H1 (cell line): ENCODE measurements at regions of chr15 and their contacts with region 1.

Region 1: DNA sequence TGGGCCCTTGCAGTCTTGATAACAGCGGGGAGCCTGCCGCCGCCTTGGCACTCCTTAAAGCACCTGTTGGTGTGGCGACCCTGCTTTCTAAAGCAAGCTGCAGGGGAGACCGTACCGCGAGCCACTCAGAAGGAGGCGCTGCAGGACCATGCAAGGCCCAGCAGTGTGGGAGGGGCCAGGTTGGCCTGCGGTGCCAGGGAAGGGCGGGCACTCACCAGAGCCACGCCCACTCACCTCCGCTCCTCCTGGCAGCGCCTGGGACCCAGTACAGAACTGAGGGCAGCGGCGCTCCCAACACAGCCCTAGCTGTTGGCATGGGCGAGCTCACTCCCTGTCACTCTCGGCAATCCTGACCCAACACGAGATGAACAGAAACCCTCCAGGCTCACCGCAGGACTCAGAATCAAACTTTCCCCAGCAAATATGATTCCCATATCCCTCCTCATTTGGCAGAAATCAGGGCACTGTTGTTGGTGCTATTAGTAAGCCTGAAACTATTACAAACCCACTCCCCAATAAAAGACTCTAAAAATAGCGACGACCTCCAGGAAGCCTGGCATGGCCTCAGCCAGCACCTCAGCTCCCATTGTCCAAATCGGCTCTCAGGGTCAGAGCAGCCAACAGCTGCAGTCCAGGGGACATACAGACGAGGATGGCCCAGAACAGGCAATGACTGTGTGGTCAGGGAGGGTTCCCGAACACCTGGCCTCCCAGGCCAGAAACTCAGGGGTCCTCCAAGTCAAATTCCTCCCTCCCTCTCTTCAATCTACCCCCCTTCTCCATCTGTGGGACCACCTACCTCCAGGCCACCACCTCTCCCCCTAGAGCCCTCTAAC is 77.2 kb downstream of the TBC1D2B start:
- DNase-seq: peak; percentile 85 to 96
- H3K4me3 ChIP-seq: no peak overlapping the region
- H3K27ac ChIP-seq: no peak overlapping the region
- H3K4me1 ChIP-seq: peaks cover 0 to 4% (median 0%) of the 10 kb centered on the region in 4 experiments; a peak in 2 of 7 replicates
- H3K27me3 ChIP-seq: no peaks in the 10 kb centered on the region
- CTCF ChIP-seq: peak; percentile 89 to 98 (median 93)
- EP300 ChIP-seq: peak in 1 of 2 experiments; percentile 46; a peak in 1 of 3 replicates
- POLR2A ChIP-seq: no peak
- RAD21 ChIP-seq: peak; percentile 97 to 98

Region 2: GRCh38 chr15:77753270-77753873 is 246.9 kb before region 1 on chr15:
- CTCF ChIA-PET with region 1: no interaction called
- POLR2A ChIA-PET with region 1: no interaction called
- DNase-seq: peak in 1 of 2 experiments; percentile 82
- H3K4me3 ChIP-seq: no peak overlapping the region
- H3K27ac ChIP-seq: no peak overlapping the region
- H3K4me1 ChIP-seq: peaks cover 0 to 2% (median under 1%) of the 10 kb centered on the region in 4 experiments; a peak in 2 of 7 replicates
- H3K27me3 ChIP-seq: peaks cover 0 to 11% (median 1%) of the 10 kb centered on the region in 4 experiments; a peak in 2 of 7 replicates
- CTCF ChIP-seq: no peak
- EP300 ChIP-seq: no peak
- POLR2A ChIP-seq: no peak
- RAD21 ChIP-seq: peak; percentile 1 to 10; a peak in 1 of 4 replicates

Region 3: DNA sequence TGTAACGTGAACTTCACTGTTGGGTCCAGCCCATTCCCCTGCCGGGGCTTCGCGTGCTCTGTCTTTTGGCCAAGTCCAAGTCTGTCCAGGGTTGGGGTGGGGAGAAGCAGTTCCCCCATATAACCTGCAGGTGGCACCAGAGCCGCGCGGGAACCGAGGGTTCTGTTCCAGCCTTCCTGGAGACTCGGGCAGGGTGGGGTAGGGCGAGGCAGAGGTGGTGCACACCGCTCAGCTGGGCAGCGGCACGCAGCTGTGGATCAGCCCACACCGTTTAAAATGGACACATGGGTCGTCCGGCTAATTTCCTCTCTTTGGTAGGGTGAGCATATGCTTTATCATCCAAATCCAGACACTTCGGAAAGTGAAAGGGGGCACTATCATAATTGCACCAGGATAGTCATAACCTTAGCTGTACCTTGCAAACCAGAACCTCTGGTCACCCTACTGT is 40.9 kb before region 1 on chr15:
- CTCF ChIA-PET with region 1: interaction called, 22 read pairs
- POLR2A ChIA-PET with region 1: no interaction called
- DNase-seq: peak; percentile 58 to 99
- H3K4me3 ChIP-seq: no peak overlapping the region
- H3K27ac ChIP-seq: no peak overlapping the region
- H3K4me1 ChIP-seq: peaks cover 0 to 5% (median 1%) of the 10 kb centered on the region in 4 experiments; a peak in 4 of 7 replicates
- H3K27me3 ChIP-seq: no peaks in the 10 kb centered on the region; a peak in 1 of 7 replicates
- CTCF ChIP-seq: peak; percentile 90 to 97 (median 97)
- EP300 ChIP-seq: no peak
- POLR2A ChIP-seq: no peak
- RAD21 ChIP-seq: peak; percentile 97 to 98

Region 4: DNA sequence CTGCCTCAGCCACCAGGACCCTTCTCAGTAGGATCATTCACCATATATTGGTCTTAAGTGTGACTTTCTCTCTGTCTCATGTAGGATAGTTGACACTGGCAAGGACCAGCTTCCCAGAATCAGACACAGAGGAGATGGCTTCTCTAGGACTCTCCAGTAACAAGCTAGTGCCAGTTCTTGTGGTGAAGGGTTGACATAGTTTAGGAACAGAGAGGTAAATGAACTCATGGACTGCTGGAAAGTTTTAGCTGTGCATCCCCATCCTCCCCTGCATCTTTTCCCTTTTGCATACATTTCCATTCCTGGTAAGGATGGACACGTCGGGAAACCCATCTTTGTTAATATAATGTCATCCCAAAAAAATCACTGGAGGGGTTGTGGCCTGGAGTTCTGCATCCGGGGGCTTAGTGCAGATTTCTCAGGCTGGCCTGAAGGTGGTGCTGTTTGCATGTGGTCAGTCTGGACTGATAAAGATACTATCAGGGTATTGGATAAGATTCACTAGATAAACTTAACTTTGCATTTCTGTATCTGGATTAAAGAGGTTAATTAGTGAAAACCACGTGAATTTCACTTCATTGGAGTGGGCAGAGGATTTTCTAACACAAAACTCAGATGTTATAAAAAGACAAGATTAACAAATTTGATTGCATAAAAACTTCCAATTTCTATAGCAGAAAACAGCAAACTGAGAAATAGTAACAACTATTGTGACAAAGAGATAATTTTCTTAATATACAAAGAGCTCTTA is 33.6 kb before region 1 on chr15:
- CTCF ChIA-PET with region 1: interaction called, 26 read pairs
- POLR2A ChIA-PET with region 1: no interaction called
- DNase-seq: peak in 1 of 2 experiments; percentile 69
- H3K4me3 ChIP-seq: no peak overlapping the region
- H3K27ac ChIP-seq: no peak overlapping the region
- H3K4me1 ChIP-seq: no peaks in the 10 kb centered on the region
- H3K27me3 ChIP-seq: no peaks in the 10 kb centered on the region; a peak in 1 of 7 replicates
- CTCF ChIP-seq: peak; percentile 71 to 85 (median 75)
- EP300 ChIP-seq: no peak
- POLR2A ChIP-seq: no peak
- RAD21 ChIP-seq: peak; percentile 84 to 85

Region 5: GRCh38 chr15:77983708-77984445 is 16.4 kb before region 1 on chr15:
- CTCF ChIA-PET with region 1: interaction called, 10 read pairs
- POLR2A ChIA-PET with region 1: interaction called, 4 read pairs
- DNase-seq: peak in 1 of 2 experiments; percentile 41
- H3K4me3 ChIP-seq: no peak overlapping the region
- H3K27ac ChIP-seq: no peak overlapping the region
- H3K4me1 ChIP-seq: peaks cover 0 to 16% (median 11%) of the 10 kb centered on the region in 4 experiments; a peak in 6 of 7 replicates
- H3K27me3 ChIP-seq: no peaks in the 10 kb centered on the region
- CTCF ChIP-seq: peak in 2 of 3 experiments; percentile 18 to 45; a peak in 1 of 4 replicates
- EP300 ChIP-seq: no peak
- POLR2A ChIP-seq: no peak
- RAD21 ChIP-seq: peak in 1 of 2 experiments; percentile 33; a peak in 1 of 4 replicates

Region 6: GRCh38 chr15:78018946-78019644 is 18.8 kb after region 1 on chr15:
- CTCF ChIA-PET with region 1: interaction called, 13 read pairs
- POLR2A ChIA-PET with region 1: no interaction called
- DNase-seq: no peak
- H3K4me3 ChIP-seq: no peak overlapping the region
- H3K27ac ChIP-seq: no peak overlapping the region
- H3K4me1 ChIP-seq: no peaks in the 10 kb centered on the region
- H3K27me3 ChIP-seq: no peaks in the 10 kb centered on the region
- CTCF ChIP-seq: no peak
- EP300 ChIP-seq: no peak
- POLR2A ChIP-seq: no peak
- RAD21 ChIP-seq: no peak

Region 7: DNA sequence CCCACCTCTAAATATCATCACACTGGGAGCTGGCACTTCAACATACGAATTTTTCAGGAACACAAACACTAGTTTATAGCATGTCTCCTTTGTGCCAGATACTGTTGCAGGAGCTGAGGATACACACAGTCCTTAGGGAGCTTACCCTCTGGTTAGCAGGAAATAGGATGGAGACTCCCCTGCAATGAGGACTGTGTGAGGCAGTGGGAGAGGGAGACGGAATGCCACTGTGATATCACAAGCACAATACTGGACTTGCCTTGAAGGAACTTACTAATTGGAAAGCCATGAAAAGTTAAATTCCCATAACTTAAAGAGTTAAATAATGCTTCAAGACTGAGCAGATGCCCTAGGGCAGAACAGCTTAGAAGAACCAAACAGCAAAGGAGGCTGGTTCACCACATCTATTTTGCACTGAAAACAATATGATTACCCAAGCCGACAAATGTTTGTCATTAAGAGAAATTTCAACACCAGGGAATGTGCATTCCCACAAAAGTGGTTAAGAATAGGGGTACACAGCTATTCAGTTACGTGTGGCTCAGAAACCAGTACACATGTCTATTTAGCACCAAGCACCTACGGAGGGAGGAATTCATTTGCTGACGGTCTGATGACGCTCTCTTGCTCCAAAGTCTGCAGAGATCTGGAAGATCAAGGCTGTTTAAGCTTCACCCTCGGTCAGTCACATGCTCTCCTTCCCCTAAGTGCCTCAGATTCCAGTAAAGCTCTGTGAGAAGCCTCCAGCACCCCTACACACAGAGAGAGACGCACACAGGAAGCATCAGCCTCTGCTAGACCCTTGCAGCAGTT is 72.0 kb after region 1 on chr15:
- CTCF ChIA-PET with region 1: interaction called, 16 read pairs
- POLR2A ChIA-PET with region 1: no interaction called
- DNase-seq: no peak
- H3K4me3 ChIP-seq: no peak overlapping the region
- H3K27ac ChIP-seq: no peak overlapping the region
- H3K4me1 ChIP-seq: peaks cover 10 to 24% (median 18%) of the 10 kb centered on the region in 4 experiments
- H3K27me3 ChIP-seq: no peaks in the 10 kb centered on the region
- CTCF ChIP-seq: no peak
- EP300 ChIP-seq: no peak
- POLR2A ChIP-seq: no peak
- RAD21 ChIP-seq: no peak

Region 8: GRCh38 chr15:78382114-78382880 is 382.0 kb after region 1 on chr15:
- CTCF ChIA-PET with region 1: no interaction called
- POLR2A ChIA-PET with region 1: no interaction called
- DNase-seq: no peak
- H3K4me3 ChIP-seq: no peak overlapping the region
- H3K27ac ChIP-seq: no peak overlapping the region
- H3K4me1 ChIP-seq: peaks cover 0 to 14% (median 5%) of the 10 kb centered on the region in 4 experiments; a peak in 4 of 7 replicates
- H3K27me3 ChIP-seq: peaks cover 0 to 2% (median under 1%) of the 10 kb centered on the region in 4 experiments; a peak in 1 of 7 replicates
- CTCF ChIP-seq: no peak
- EP300 ChIP-seq: no peak
- POLR2A ChIP-seq: no peak
- RAD21 ChIP-seq: no peak